ENCODE measurements at regions of chr17 and their contacts with region 1.

Region 1: GRCh38 chr17:80663781-80664206 is 119.2 kb downstream of the RPTOR start:
- DNase-seq: peak; percentile 37
- H3K4me3 Mint-ChIP-seq: peak overlapping the region; percentile 76
- H3K27ac Mint-ChIP-seq: peak overlapping the region; percentile 82
- H3K4me1 Mint-ChIP-seq: peaks cover 84% of the 10 kb centered on the region
- H3K27me3 Mint-ChIP-seq: no peaks in the 10 kb centered on the region

Region 2: GRCh38 chr17:79923974-79924638 is 739.7 kb before region 1 on chr17:
- intact Hi-C with region 1: no loop called
- DNase-seq: peak; percentile 14
- H3K4me3 Mint-ChIP-seq: no peak overlapping the region
- H3K27ac Mint-ChIP-seq: no peak overlapping the region
- H3K4me1 Mint-ChIP-seq: no peaks in the 10 kb centered on the region
- H3K27me3 Mint-ChIP-seq: peaks cover 6% of the 10 kb centered on the region

Region 3: DNA sequence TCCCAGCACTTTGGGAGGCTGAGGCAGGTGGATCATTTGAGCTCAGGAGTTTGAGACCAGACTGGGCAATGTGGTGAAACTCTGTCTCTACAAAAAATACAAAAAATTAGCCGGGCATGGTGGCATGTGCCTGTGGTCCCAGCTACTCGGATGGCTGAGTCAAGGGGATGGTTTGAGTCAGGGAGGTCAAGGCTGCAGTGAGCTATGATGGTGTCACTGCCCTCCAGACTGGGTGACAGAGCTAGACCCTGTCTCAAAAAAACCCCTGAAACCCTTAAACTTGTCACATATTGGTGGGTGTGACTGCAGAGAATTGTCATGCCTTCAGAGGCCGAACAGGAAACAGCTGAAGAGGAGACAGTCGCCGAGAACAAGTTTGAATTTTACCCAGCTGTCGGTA is 105.7 kb before region 1 on chr17:
- intact Hi-C with region 1: no loop called
- DNase-seq: no peak
- H3K4me3 Mint-ChIP-seq: no peak overlapping the region
- H3K27ac Mint-ChIP-seq: no peak overlapping the region
- H3K4me1 Mint-ChIP-seq: no peaks in the 10 kb centered on the region
- H3K27me3 Mint-ChIP-seq: no peaks in the 10 kb centered on the region

Region 4: GRCh38 chr17:80605326-80606066 is 58.3 kb before region 1 on chr17:
- intact Hi-C with region 1: loop called (anchors 5 kb)
- DNase-seq: peak; percentile 31
- H3K4me3 Mint-ChIP-seq: no peak overlapping the region
- H3K27ac Mint-ChIP-seq: peak overlapping the region; percentile 35
- H3K4me1 Mint-ChIP-seq: peaks cover 66% of the 10 kb centered on the region
- H3K27me3 Mint-ChIP-seq: peaks cover 2% of the 10 kb centered on the region

Region 5: DNA sequence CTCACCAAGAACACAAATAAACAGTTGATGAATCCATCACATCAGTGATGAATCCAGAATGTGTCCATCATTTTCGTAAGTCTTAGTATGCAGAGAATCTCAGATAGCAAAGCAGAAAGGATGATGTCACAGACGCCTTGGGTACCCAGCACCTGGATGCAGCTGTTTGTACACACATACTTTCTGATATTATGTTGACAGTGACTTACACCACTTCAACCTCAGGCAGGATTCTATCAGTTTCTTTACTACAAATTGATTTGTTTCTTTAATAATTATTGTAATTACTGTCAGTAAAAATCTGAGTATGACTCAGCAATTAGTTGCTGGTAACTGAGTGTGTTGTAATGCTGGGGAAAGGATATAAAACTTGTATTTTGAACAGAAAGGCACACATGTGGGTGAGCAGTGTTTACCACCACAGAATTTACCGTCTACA is 40.6 kb after region 1 on chr17:
- intact Hi-C with region 1: loop called (anchors 5 kb)
- DNase-seq: no peak
- H3K4me3 Mint-ChIP-seq: peak overlapping the region; percentile 32
- H3K27ac Mint-ChIP-seq: peak overlapping the region; percentile 46
- H3K4me1 Mint-ChIP-seq: peaks cover 82% of the 10 kb centered on the region
- H3K27me3 Mint-ChIP-seq: no peaks in the 10 kb centered on the region

Region 6: DNA sequence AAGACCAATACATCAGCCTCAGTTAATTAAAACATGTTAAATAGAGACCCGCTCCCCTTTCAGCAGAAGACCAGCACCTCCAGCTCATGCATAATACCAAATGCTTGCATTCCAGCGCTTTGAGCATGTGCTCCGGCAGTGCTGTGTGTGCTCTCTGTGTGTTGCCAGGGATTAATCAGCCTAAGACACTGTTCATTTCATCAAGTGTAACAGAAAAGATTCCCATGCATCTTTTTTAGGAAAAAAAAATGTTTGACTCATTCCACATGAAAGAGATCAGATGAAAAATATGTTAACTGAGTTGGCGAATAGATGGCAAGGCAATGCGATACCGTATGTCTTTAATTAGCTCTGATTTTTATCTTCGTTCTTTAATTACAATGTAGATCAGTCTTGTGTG is 68.5 kb after region 1 on chr17:
- intact Hi-C with region 1: loop called (anchors 5 kb)
- DNase-seq: no peak
- H3K4me3 Mint-ChIP-seq: no peak overlapping the region
- H3K27ac Mint-ChIP-seq: no peak overlapping the region
- H3K4me1 Mint-ChIP-seq: peaks cover 70% of the 10 kb centered on the region
- H3K27me3 Mint-ChIP-seq: peaks cover 1% of the 10 kb centered on the region

Region 7: GRCh38 chr17:80876950-80877728 is 213.3 kb after region 1 on chr17:
- intact Hi-C with region 1: loop called (anchors 2 kb)
- DNase-seq: peak; percentile 64
- H3K4me3 Mint-ChIP-seq: peak overlapping the region; percentile 65
- H3K27ac Mint-ChIP-seq: peak overlapping the region; percentile 96
- H3K4me1 Mint-ChIP-seq: peaks cover 55% of the 10 kb centered on the region
- H3K27me3 Mint-ChIP-seq: no peaks in the 10 kb centered on the region